Vagina (tissue), 2 donors: ENCODE measurements at regions of chrX and their contacts with region 1.

Region 1: GRCh38 chrX:69538321-69538876 is 34.3 kb downstream of the NALF2 start:
- DNase-seq: no peak
- H3K4me3 ChIP-seq: peak overlapping the region; percentile 31 to 44
- H3K27ac ChIP-seq: no peak overlapping the region
- H3K4me1 ChIP-seq: no peaks in the 10 kb centered on the region
- H3K27me3 ChIP-seq: no peaks in the 10 kb centered on the region
- CTCF ChIP-seq: peak; percentile 46 to 70 (median 58)
- POLR2A ChIP-seq: no peak

Region 2: GRCh38 chrX:69670001-69670555 is 131.7 kb after region 1 on chrX:
- intact Hi-C with region 1: no loop called
- DNase-seq: no peak
- H3K4me3 ChIP-seq: no peak overlapping the region
- H3K27ac ChIP-seq: no peak overlapping the region
- H3K4me1 ChIP-seq: no peaks in the 10 kb centered on the region
- H3K27me3 ChIP-seq: no peaks in the 10 kb centered on the region
- CTCF ChIP-seq: no peak
- POLR2A ChIP-seq: no peak

Region 3: GRCh38 chrX:70022616-70023015 is 484.2 kb after region 1 on chrX:
- intact Hi-C with region 1: loop called (anchors 5 kb)
- DNase-seq: no peak
- H3K4me3 ChIP-seq: no peak overlapping the region
- H3K27ac ChIP-seq: no peak overlapping the region
- H3K4me1 ChIP-seq: no peaks in the 10 kb centered on the region
- H3K27me3 ChIP-seq: no peaks in the 10 kb centered on the region
- CTCF ChIP-seq: no peak
- POLR2A ChIP-seq: no peak

Region 4: DNA sequence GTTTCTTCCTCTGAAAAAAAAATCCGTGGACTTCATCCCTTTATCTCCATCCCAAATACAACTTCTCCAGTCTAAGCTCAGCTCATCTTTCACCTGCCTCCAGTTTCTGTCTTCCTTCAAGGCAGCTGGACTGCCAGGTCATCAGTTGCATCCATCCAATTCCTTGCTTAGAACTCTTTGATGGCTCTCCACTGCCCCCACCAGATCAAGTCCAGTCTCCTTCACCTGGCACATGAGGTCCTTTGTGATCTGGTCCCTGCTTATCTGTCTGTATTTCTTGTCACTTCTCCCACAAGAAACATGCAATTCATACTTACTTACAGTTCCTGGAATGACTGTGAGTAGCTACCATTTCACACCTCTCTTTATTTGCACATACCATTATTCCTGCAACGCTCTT is 557.7 kb after region 1 on chrX:
- intact Hi-C with region 1: loop called (anchors 10 kb)
- DNase-seq: no peak
- H3K4me3 ChIP-seq: no peak overlapping the region
- H3K27ac ChIP-seq: no peak overlapping the region
- H3K4me1 ChIP-seq: no peaks in the 10 kb centered on the region
- H3K27me3 ChIP-seq: no peaks in the 10 kb centered on the region
- CTCF ChIP-seq: no peak
- POLR2A ChIP-seq: no peak